Spleen (tissue), 13 donors: ENCODE measurements at regions of chr5 and their contacts with region 1.

Region 1: GRCh38 chr5:65481635-65482295 is at the start of gene ADAMTS6:
- DNase-seq: peak; percentile 90
- H3K4me3 ChIP-seq: peak within 1 kb of the TSS; percentile 49 to 73 (median 58)
- H3K27ac ChIP-seq: peak within 1 kb of the TSS; percentile 71 to 88 (median 84)
- H3K4me1 ChIP-seq: peaks cover 9 to 51% (median 30%) of the 10 kb centered on the region in 6 donors
- H3K27me3 ChIP-seq: peaks cover 0 to 9% (median 0%) of the 10 kb centered on the region in 7 donors
- CTCF ChIP-seq: no peak
- POLR2A ChIP-seq: peak in 1 of 3 donors; percentile 51
- total RNA-seq, gene ADAMTS6: 5.4 to 16.4 (median 8.7) TPM

Region 2: DNA sequence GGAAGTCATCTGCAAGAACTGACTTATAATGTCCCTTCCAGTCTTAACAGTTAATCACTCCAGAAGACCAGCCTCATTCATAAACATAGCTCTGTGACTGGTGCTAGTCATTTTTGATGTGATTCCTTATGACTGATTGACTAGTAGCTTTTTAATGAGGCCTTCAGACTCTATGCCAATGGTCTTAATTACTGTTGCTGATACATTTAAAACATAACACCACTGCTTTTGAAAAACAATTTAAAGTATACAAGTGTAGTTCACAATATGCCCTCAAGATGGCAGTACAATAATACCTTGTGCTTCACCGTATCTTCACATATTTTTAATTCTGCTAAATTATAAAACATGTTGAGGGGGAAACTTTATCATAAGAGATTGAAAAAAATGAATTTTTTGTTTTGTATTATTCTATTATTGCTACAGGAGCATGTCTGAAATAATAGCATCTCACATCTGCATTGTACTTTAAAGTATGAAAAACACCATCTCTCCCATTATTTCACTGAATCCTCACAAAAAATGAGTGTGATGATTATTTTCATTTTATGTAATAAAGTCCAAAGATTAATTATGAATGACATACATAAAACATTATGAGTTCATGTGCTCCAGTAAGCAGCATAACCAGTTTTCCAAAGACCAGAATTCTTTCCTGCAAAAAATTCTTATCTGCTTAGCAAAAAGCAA is 846.6 kb before region 1 on chr5:
- intact Hi-C with region 1: loop called (anchors 10 kb)
- DNase-seq: no peak
- H3K4me3 ChIP-seq: no peak overlapping the region
- H3K27ac ChIP-seq: no peak overlapping the region
- H3K4me1 ChIP-seq: peaks cover 0 to 9% (median 2%) of the 10 kb centered on the region in 6 donors
- H3K27me3 ChIP-seq: peaks cover 0 to 29% (median 0%) of the 10 kb centered on the region in 7 donors
- CTCF ChIP-seq: peak; percentile 35 to 75 (median 68)
- POLR2A ChIP-seq: no peak

Region 3: GRCh38 chr5:64811050-64811640 is 670.6 kb before region 1 on chr5:
- intact Hi-C with region 1: loop called (anchors 5 kb)
- DNase-seq: no peak
- H3K4me3 ChIP-seq: no peak overlapping the region
- H3K27ac ChIP-seq: no peak overlapping the region
- H3K4me1 ChIP-seq: peaks cover 0 to 4% (median 0%) of the 10 kb centered on the region in 6 donors
- H3K27me3 ChIP-seq: no peaks in the 10 kb centered on the region
- CTCF ChIP-seq: peak; percentile 21 to 69 (median 56)
- POLR2A ChIP-seq: no peak

Region 4: DNA sequence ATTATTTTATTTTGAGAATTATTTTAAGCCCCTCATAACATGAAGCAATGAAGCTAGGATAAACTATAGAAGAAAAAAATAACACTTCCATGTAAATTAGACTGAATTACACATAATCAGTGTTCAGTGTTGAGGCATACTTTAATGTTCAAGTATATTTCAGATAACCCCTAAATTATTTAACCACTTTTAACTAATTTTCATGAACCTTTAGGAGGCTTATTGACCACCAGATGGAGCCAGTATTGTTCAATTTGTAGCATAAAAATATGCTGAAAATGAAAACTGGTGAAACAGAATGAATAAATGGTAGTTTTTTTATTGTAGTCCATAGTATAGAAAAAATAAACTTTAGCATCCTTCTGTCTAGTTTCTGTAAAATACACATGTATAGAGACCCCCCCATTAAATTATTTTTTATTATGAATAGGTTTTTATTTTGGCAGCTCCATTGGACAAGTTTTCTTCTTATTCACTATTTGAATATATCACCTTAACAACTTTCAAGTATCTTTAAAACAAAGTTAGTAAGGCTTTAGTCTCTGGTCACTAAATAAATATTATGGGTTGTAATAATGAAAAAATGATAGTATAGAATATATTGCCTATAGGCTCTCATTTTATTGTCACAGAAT is 522.9 kb before region 1 on chr5:
- intact Hi-C with region 1: loop called (anchors 5 kb)
- DNase-seq: no peak
- H3K4me3 ChIP-seq: no peak overlapping the region
- H3K27ac ChIP-seq: no peak overlapping the region
- H3K4me1 ChIP-seq: no peaks in the 10 kb centered on the region
- H3K27me3 ChIP-seq: no peaks in the 10 kb centered on the region
- CTCF ChIP-seq: peak in 9 of 11 experiments; percentile 20 to 62 (median 46)
- POLR2A ChIP-seq: no peak

Region 5: DNA sequence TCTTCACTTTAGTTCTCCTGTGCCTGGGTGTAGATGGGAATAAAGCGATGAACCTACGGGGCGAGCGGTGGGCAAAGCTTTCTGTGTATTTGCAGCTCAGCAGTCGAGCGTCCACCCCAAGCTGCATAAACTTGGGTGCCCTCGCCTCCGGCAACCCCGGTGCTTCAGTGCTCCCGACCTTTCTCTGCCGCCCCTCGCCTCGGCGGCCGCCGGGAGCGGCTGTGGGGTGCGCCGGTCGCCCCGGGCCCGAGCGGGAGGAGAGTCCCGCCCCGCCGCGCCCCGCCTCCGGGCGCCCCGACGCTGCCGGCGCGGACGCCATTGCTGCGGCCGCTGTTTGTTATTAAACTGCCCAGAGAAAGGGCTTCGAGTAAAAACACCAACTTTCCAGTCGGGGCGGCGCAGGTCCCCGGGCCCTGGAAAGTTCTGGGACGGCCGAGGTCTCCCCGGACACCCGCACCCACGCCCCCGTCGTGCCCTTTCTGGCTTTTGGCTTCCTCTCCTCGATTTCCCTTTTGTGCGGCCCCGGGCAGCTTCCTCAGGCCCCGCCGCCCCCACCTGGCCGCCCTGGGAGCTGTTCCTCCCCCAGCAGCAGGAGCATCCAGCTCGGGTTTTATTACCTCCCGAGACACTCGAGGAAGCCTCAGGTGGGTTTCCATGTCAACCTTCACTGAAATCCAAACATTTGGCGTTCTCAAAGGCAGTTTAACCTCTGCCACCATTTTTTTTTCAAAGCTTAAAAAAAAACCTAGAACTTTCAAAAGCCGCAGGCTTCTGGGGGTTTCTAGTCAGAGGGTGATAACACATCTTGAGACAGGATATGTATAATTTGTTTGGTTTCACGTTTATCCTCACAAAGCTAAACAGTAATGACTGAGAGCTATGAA is 378.7 kb before region 1 on chr5:
- intact Hi-C with region 1: loop called (anchors 10 kb)
- DNase-seq: peak; percentile 88
- H3K4me3 ChIP-seq: peak overlapping the region; percentile 27 to 75 (median 54)
- H3K27ac ChIP-seq: peak overlapping the region; percentile 85 to 92 (median 88)
- H3K4me1 ChIP-seq: peaks cover 3 to 27% (median 6%) of the 10 kb centered on the region in 6 donors
- H3K27me3 ChIP-seq: no peaks in the 10 kb centered on the region
- CTCF ChIP-seq: peak in 7 of 11 experiments; percentile 25 to 58 (median 50)
- POLR2A ChIP-seq: no peak